ENCODE measurements at regions of chr9 and their contacts with region 1.

Region 1: DNA sequence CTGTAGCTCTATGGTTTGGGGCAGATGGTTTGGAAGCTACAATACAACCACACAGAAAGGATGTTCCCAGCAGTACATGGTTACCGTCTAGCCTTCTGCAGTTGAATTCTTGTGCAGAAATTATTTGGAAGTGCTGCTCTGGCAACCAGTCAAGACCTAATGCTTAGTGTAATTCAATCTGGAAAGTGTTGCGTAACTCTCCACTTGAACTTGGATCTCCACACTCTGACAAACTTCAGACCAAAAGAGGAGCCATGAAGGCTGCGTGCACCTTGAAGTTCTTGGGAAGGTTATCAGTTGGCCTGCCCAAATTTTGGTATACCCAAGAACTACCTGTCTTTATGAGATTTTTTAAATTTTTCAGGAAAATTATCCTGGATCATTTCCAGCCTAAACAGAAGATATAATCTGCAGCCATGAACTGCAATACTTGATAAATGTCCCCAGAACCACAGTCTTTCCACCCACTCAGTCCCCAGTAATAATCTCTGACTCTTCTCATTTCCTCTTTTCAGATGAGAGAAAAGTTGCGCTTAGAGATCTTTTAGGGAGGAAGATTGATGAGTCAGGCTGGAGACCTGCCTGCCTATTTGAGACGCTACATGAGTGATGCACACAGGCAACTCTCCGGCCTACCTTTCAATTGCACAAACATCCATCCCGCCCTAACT is 159.9 kb downstream of the FANCC start:
- DNase-seq: peak; percentile 67
- H3K4me3 ChIP-seq: no peak overlapping the region
- H3K27me3 ChIP-seq: no peaks in the 10 kb centered on the region
- CTCF ChIP-seq: no peak

Region 2: DNA sequence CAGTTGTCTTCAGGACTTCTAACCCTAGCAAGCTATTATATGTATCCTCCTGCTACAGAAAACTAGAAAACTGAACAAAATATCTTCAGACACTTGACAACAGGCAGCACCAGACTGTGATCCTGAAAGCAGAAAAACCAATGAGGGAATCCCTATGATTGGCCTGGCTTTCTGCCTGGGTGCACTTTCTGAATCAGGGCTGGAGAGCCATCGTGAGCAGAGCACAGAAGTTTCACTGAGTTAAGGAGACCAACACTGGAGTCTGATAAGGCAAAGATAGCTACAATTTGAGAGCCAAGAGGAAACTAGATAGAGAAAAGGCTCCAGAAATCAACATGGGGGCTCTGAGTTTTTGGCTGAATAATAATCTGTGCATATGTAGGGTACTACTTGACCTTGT is 53.4 kb after region 1 on chr9:
- CTCF ChIA-PET with region 1: no interaction called
- POLR2A ChIA-PET with region 1: interaction called, 15 read pairs
- DNase-seq: no peak
- H3K4me3 ChIP-seq: no peak overlapping the region
- H3K27me3 ChIP-seq: no peaks in the 10 kb centered on the region
- CTCF ChIP-seq: no peak

Measured in BJ (cell line).